Activated T-helper 1 cell treated with anti-CD3 and anti-CD28 coated beads, Interleukin-12 subunit alpha, Interleukin-12 subunit beta, Interleukin-2, Interleukin-4 antibody, amounts not matched to agents 30 ng/mL and 10 ng/mL and 1 ng/mL, durations not matched to agents 14 hours and 24 hours and 36 hours (primary cell): ENCODE measurements at regions of chr16 and their contacts with region 1.

Region 1: GRCh38 chr16:1971796-1972489 is at the start of gene TBL3:
- DNase-seq: peak; percentile 97
- H3K4me3 Mint-ChIP-seq: peak within 1 kb of the TSS; percentile 97
- H3K27ac Mint-ChIP-seq: peak within 1 kb of the TSS; percentile 99
- H3K4me1 Mint-ChIP-seq: peaks cover 19% of the 10 kb centered on the region
- H3K27me3 Mint-ChIP-seq: no peaks in the 10 kb centered on the region
- total RNA-seq, gene TBL3: 84.9 and 87.3 TPM in 2 replicates

Region 2: DNA sequence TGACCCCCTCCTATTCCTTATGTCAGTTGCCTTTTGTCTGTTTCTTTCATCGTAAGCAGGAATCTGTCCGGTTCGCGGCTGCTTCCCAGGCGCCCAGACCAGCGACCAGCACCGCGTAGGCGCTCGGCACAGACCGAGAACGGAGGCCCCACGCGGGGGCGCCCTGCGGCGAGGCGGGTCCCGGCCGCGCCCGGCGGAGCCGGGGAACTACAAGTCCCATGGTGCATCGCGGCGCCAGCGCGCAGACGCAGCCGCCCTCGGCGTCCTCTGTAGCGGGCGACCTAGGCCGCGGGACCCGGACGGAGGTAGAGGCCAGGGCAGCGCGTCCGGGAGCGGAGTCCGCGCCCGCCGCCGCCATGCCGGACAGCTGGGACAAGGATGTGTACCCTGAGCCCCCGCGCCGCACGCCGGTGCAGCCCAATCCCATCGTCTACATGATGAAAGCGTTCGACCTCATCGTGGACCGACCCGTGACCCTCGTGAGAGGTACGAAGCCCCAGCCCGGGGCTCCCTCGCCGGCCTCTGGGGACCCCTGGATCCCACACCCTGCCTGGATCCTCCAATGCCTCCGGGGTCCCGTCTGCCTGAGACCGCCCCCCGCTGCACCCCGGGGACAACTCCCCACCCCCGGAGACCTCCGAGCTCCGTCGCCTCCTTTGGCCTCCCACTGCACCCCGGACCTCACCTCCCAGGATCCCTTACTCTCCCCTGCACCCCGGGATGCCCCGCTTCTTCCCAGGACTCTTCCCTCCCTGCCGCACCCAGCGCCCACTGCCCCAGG is 12.5 kb before region 1 on chr16 and contains the start of gene NDUFB10:
- intact Hi-C with region 1: loop called (anchors 1 kb)
- DNase-seq: peak; percentile 93
- H3K4me3 Mint-ChIP-seq: peak within 1 kb of the TSS; percentile 97
- H3K27ac Mint-ChIP-seq: peak within 1 kb of the TSS; percentile 90
- H3K4me1 Mint-ChIP-seq: peaks cover 34% of the 10 kb centered on the region
- H3K27me3 Mint-ChIP-seq: no peaks in the 10 kb centered on the region
- total RNA-seq, gene NDUFB10: 134 and 138 TPM in 2 replicates